ENCODE measurements at regions of chr9 and their contacts with region 1.

Region 1: GRCh38 chr9:135655337-135655736 is 7.8 kb upstream of the LCN9 start:
- DNase-seq: no peak
- H3K4me3 ChIP-seq: no peak overlapping the region
- H3K27ac ChIP-seq: no peak overlapping the region
- H3K4me1 ChIP-seq: no peaks in the 10 kb centered on the region
- H3K27me3 ChIP-seq: no peaks in the 10 kb centered on the region
- CTCF ChIP-seq: no peak

Region 2: GRCh38 chr9:135574331-135574730 is 81.0 kb before region 1 on chr9:
- CTCF ChIA-PET with region 1: no interaction called
- dilution Hi-C with region 1: loop called (anchors 5 kb)
- in situ Hi-C with region 1: no loop called
- intact Hi-C with region 1: no loop called
- DNase-seq: no peak
- H3K4me3 ChIP-seq: no peak overlapping the region
- H3K27ac ChIP-seq: no peak overlapping the region
- H3K4me1 ChIP-seq: no peaks in the 10 kb centered on the region
- H3K27me3 ChIP-seq: no peaks in the 10 kb centered on the region
- CTCF ChIP-seq: no peak

Region 3: GRCh38 chr9:135596211-135596610 is 59.1 kb before region 1 on chr9:
- CTCF ChIA-PET with region 1: no interaction called
- dilution Hi-C with region 1: loop called (anchors 5 kb)
- in situ Hi-C with region 1: no loop called
- intact Hi-C with region 1: no loop called
- DNase-seq: no peak
- H3K4me3 ChIP-seq: no peak overlapping the region
- H3K27ac ChIP-seq: no peak overlapping the region
- H3K4me1 ChIP-seq: no peaks in the 10 kb centered on the region
- H3K27me3 ChIP-seq: no peaks in the 10 kb centered on the region
- CTCF ChIP-seq: no peak

Region 4: GRCh38 chr9:135704483-135704882 is 49.1 kb after region 1 on chr9:
- CTCF ChIA-PET with region 1: no interaction called
- dilution Hi-C with region 1: no loop called
- in situ Hi-C with region 1: no loop called
- intact Hi-C with region 1: no loop called
- DNase-seq: no peak
- H3K4me3 ChIP-seq: no peak overlapping the region
- H3K27ac ChIP-seq: no peak overlapping the region
- H3K4me1 ChIP-seq: no peaks in the 10 kb centered on the region
- H3K27me3 ChIP-seq: no peaks in the 10 kb centered on the region
- CTCF ChIP-seq: no peak